Endothelial cell of umbilical vein (primary cell): ENCODE measurements at regions of chr17 and their contacts with region 1.

Region 1: DNA sequence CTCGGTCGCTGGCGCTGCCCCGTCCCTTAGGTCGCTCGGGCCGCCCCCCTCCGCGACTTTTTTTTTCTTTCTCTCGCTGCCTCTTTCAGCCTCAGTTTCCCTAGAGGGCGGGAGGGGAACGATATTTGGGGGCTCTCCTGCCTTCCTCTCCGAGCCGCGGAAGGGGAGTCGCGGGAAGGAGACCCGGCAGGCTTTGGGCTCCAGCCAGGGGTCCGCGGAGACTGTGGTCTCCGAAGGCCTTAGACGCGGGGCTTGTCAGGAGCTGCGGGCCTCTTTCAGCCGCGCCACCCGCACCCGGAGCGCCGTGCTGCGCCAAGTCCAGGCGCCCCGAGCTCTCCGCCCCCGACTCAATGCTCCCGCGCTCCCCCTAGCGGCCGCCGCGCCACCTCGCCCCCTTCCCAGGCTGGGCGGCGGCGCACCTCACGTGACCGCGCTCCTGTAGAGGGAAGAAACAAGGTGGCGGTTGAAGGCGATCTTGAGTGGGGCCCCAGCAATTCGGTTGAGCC is at the start of gene LRRC37B:
- DNase-seq: peak; percentile 85
- H3K4me3 ChIP-seq: peak within 1 kb of the TSS; percentile 18 to 84 (median 71)
- H3K27ac ChIP-seq: peak within 1 kb of the TSS; percentile 0
- H3K4me1 ChIP-seq: peaks cover 7% of the 10 kb centered on the region
- H3K27me3 ChIP-seq: no peaks in the 10 kb centered on the region
- CTCF ChIP-seq: peak; percentile 89
- POLR2A ChIP-seq: no peak
- total RNA-seq, gene LRRC37B: 19.0 and 22.5 TPM in 2 replicates

Region 2: DNA sequence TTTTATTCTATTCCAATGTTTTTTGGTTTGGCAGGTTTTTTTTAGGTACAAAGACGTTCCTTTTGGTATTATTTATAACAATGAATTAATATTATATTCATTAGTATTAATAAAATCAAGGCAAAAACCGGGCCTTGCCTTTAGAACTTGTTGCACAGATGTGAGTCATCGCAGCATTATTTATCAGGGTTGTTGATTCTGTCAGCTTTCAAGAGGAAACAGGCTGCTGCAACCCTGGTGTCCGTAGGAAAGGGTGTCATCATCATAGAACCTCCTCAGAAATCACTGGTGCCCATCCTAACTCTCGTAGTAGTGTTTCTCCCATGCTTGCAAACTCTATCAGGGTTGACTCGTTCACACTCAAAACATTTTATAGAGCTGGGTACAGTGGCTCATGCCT is 10.0 kb before region 1 on chr17:
- CTCF ChIA-PET with region 1: interaction called, 15 read pairs
- POLR2A ChIA-PET with region 1: no interaction called
- dilution Hi-C with region 1: no loop called
- intact Hi-C with region 1: no loop called
- DNase-seq: no peak
- H3K4me3 ChIP-seq: no peak overlapping the region
- H3K27ac ChIP-seq: no peak overlapping the region
- H3K4me1 ChIP-seq: no peaks in the 10 kb centered on the region
- H3K27me3 ChIP-seq: no peaks in the 10 kb centered on the region
- CTCF ChIP-seq: no peak
- POLR2A ChIP-seq: no peak

Region 3: GRCh38 chr17:32103476-32104113 is 96.6 kb after region 1 on chr17:
- CTCF ChIA-PET with region 1: interaction called, 12 read pairs
- POLR2A ChIA-PET with region 1: no interaction called
- dilution Hi-C with region 1: no loop called
- intact Hi-C with region 1: no loop called
- DNase-seq: peak; percentile 74
- H3K4me3 ChIP-seq: no peak overlapping the region
- H3K27ac ChIP-seq: no peak overlapping the region
- H3K4me1 ChIP-seq: peaks cover 17% of the 10 kb centered on the region
- H3K27me3 ChIP-seq: no peaks in the 10 kb centered on the region
- CTCF ChIP-seq: no peak
- POLR2A ChIP-seq: no peak

Region 4: GRCh38 chr17:32111141-32111771 is 104.2 kb after region 1 on chr17:
- CTCF ChIA-PET with region 1: interaction called, 16 read pairs
- POLR2A ChIA-PET with region 1: no interaction called
- dilution Hi-C with region 1: no loop called
- intact Hi-C with region 1: no loop called
- DNase-seq: peak; percentile 75
- H3K4me3 ChIP-seq: no peak overlapping the region
- H3K27ac ChIP-seq: no peak overlapping the region
- H3K4me1 ChIP-seq: peaks cover 9% of the 10 kb centered on the region
- H3K27me3 ChIP-seq: no peaks in the 10 kb centered on the region
- CTCF ChIP-seq: peak; percentile 28 to 56
- POLR2A ChIP-seq: no peak

Region 5: DNA sequence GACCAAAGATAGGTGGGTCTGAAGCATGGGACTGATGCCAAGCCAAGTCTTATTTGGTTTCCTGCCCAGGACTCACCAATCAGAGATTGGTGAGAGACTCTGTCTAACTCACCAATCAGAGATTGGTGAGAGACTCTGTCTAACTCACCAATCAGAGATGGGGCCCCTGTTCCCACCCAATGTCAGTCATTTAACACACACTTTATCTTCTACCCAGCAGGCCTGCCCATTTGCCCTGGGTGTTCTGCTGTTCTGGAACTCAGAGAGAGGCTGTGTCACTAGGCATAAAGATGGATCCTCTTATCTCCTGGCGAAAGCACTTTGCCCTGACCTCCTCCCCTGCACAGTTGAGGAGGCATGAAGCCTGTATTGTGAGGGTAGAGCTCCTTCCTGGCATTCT is 129.8 kb after region 1 on chr17:
- CTCF ChIA-PET with region 1: interaction called, 96 read pairs
- POLR2A ChIA-PET with region 1: interaction called, 3 read pairs
- dilution Hi-C with region 1: no loop called
- intact Hi-C with region 1: loop called (anchors 1 kb)
- DNase-seq: no peak
- H3K4me3 ChIP-seq: no peak overlapping the region
- H3K27ac ChIP-seq: no peak overlapping the region
- H3K4me1 ChIP-seq: peaks cover 8% of the 10 kb centered on the region
- H3K27me3 ChIP-seq: no peaks in the 10 kb centered on the region
- CTCF ChIP-seq: no peak
- POLR2A ChIP-seq: no peak

Region 6: GRCh38 chr17:32142038-32142856 is 135.2 kb after region 1 on chr17 and contains the start of gene RHOT1:
- CTCF ChIA-PET with region 1: interaction called, 96 read pairs
- POLR2A ChIA-PET with region 1: no interaction called
- dilution Hi-C with region 1: no loop called
- intact Hi-C with region 1: loop called (anchors 1 kb)
- DNase-seq: peak; percentile 83
- H3K4me3 ChIP-seq: peak within 1 kb of the TSS; percentile 78 to 98 (median 95)
- H3K27ac ChIP-seq: peak within 1 kb of the TSS; percentile 64
- H3K4me1 ChIP-seq: peaks cover 15% of the 10 kb centered on the region
- H3K27me3 ChIP-seq: no peaks in the 10 kb centered on the region
- CTCF ChIP-seq: peak; percentile 59 to 68
- POLR2A ChIP-seq: peak; percentile 59
- total RNA-seq, gene RHOT1: 22.0 and 23.5 TPM in 2 replicates

Region 7: DNA sequence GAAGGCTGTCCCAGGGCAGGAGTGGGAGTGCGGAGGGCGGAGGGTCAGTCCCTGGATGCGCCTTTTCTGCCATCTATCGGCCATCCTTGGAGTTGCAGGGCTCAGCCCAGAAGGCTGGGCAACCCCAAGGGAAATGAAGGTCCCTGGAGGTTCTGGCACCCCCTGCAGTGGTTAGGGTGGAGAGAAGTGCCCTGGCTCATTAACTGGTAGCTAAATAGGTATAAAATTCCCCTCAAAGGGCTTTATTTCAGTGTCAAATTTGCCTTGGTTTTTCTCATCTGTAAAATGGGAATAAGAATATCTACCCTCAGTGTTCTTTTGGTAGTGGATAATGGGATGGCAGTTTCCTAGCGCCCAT is 312.5 kb after region 1 on chr17:
- CTCF ChIA-PET with region 1: no interaction called
- POLR2A ChIA-PET with region 1: no interaction called
- dilution Hi-C with region 1: no loop called
- intact Hi-C with region 1: loop called (anchors 10 kb)
- DNase-seq: peak; percentile 57
- H3K4me3 ChIP-seq: no peak overlapping the region
- H3K27ac ChIP-seq: no peak overlapping the region
- H3K4me1 ChIP-seq: no peaks in the 10 kb centered on the region
- H3K27me3 ChIP-seq: peaks cover 5 to 8% of the 10 kb centered on the region in 2 experiments
- CTCF ChIP-seq: peak; percentile 93 to 95
- POLR2A ChIP-seq: no peak